Posterior vena cava (tissue), 2 donors: ENCODE measurements at regions of chr1 and their contacts with region 1.

Region 1: DNA sequence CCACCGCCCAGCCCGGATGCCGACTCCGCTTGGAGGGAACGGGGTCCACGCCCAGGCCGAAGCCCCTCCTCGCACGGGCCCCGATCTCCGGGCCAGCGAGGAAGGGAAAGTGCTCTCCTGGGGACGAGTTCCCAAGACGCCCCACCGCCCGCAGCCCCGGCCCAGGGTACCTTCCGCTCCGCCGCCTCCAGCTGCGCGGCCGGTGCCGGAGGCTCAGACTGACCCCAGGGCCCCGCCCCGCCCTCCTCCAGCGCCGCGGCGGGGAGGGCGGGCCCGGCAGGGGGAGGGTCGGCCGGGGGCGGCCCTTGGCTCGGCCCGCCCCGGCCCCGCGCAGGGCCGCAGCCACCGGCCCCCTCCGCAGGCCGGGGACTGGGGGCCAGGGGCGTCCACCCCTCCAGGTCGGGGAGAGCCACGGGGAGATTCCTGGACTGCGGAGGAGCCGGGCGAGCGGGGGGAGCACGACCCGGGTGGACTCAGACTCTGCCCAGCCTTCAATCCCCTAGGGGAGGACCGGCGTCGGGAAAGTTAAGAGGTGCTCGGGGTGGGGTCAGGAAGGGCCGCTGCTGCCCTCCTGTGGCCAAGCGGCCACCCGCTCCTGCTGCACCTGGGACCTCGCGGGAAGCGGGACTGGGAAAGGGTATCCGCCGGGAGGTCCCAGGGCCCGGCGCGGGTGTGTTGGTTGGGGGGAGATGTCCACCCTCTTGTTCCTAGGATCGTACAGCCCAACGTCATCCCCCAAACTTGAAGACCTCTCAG is at the start of gene RHOC:
- DNase-seq: peak; percentile 95
- total RNA-seq, gene RHOC: 297 to 387 TPM

Region 2: GRCh38 chr1:112619520-112620376 is 87.3 kb before region 1 on chr1 and contains the start of gene CAPZA1:
- intact Hi-C with region 1: loop called in 1 of 2 experiments (anchors 5 kb)
- DNase-seq: peak; percentile 98
- total RNA-seq, gene CAPZA1: 104 to 109 TPM

Region 3: GRCh38 chr1:112674439-112674985 is 32.6 kb before region 1 on chr1 and contains the start of gene MOV10:
- intact Hi-C with region 1: loop called in 1 of 2 experiments (anchors 5 kb)
- DNase-seq: peak; percentile 92
- total RNA-seq, gene MOV10: 29.5 to 32.3 TPM

Region 4: GRCh38 chr1:112688781-112689193 is 18.3 kb before region 1 on chr1:
- intact Hi-C with region 1: no loop called
- DNase-seq: peak; percentile 86

Region 5: GRCh38 chr1:114495486-114495885 is 1788.4 kb after region 1 on chr1:
- intact Hi-C with region 1: no loop called
- DNase-seq: no peak